Activated naive CD4-positive, alpha-beta T cell treated with anti-CD3 and anti-CD28 coated beads for 36 hours (primary cell): ENCODE measurements at regions of chr7 and their contacts with region 1.

Region 1: GRCh38 chr7:105652359-105652993 is 71.2 kb upstream of the EFCAB10 start:
- DNase-seq: peak; percentile 79
- H3K4me3 Mint-ChIP-seq: no peak overlapping the region
- H3K27ac Mint-ChIP-seq: no peak overlapping the region
- H3K4me1 Mint-ChIP-seq: peaks cover 10% of the 10 kb centered on the region
- H3K27me3 Mint-ChIP-seq: no peaks in the 10 kb centered on the region

Region 2: DNA sequence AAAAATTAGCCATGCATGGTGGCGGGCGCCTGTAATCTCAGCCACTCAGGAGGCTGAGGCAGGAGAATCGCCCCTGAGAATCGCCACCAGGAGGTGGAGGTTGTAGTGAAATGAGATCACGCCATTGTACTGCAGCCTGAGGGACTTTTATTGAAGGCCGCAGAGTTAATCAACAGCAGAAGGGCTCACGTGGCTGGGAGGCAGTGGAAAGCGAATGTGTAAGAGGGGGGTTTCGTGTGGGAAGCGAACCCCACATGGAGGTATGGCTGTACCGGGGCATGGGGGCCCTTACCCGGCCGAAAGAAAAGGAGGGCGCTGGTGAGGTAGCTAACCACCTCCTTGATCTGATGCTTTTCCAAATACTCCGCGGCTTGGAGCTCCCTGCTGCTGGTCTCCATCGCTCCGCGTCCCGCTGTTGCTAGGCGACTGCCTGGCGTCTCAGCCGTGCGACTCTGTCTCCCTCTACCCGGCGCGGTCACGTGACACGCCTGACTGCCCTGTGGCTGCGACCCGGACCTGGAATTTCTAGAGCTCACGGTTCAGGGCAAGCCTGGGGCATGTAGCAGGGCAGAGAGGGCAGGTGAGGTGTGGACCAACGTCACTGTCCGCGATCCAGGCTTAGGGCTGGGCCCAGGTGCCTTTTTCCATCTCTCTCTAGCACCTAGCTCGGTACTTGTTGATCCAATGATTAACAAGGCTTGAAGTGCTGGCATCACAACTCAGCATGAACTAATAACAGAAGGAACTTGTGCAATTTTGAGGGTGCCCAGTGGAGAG is 71.2 kb before region 1 on chr7 and contains the start of gene EFCAB10:
- CTCF ChIA-PET with region 1: no interaction called
- intact Hi-C with region 1: no loop called
- DNase-seq: peak; percentile 78
- H3K4me3 Mint-ChIP-seq: peak within 1 kb of the TSS; percentile 74
- H3K27ac Mint-ChIP-seq: no peak within 1 kb of the TSS
- H3K4me1 Mint-ChIP-seq: peaks cover 6% of the 10 kb centered on the region
- H3K27me3 Mint-ChIP-seq: peaks cover 5% of the 10 kb centered on the region
- total RNA-seq, gene EFCAB10: not detected

Region 3: GRCh38 chr7:105673367-105674142 is 21.1 kb after region 1 on chr7:
- CTCF ChIA-PET with region 1: interaction called, 55 read pairs
- intact Hi-C with region 1: no loop called
- DNase-seq: peak; percentile 24
- H3K4me3 Mint-ChIP-seq: no peak overlapping the region
- H3K27ac Mint-ChIP-seq: peak overlapping the region; percentile 76
- H3K4me1 Mint-ChIP-seq: peaks cover 61% of the 10 kb centered on the region
- H3K27me3 Mint-ChIP-seq: no peaks in the 10 kb centered on the region

Region 4: DNA sequence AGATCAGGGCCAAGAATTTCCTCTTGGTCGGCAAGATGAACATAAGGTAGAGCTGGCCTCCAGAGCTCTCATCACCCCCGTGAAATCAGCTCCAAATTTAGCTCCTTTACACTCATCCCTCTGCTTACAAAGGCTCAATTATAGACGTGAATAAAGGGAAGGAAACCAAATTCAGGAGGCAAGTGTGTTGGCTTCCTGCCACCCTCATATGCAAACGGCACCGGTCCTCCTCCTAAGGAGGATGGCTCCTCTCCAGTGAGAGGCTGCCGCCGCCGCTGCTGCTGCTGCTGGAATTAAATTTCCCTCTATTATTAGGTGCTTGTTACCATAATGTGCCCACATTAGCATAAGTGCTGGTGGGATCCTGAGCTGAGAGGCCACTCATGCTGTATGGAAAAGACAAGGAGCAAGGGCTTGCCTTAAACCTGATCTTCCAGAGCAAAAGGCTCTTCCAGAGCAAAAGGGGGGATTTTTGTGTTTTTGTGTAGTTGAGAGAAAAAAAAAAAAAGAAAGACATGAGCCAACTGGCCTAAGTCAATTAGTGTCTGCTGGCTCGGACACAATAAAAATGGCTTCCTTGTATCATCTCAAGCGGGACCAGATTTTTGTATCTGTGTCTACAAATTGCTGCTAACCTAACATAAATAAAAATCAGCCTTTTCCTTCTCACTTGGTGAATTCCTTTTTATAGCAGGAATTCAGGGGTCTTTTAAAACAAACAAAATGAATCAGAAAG is 379.0 kb after region 1 on chr7:
- CTCF ChIA-PET with region 1: interaction called, 15 read pairs
- intact Hi-C with region 1: no loop called
- DNase-seq: peak; percentile 38
- H3K4me3 Mint-ChIP-seq: no peak overlapping the region
- H3K27ac Mint-ChIP-seq: no peak overlapping the region
- H3K4me1 Mint-ChIP-seq: peaks cover 28% of the 10 kb centered on the region
- H3K27me3 Mint-ChIP-seq: no peaks in the 10 kb centered on the region

Region 5: GRCh38 chr7:106166655-106167342 is 514.3 kb after region 1 on chr7:
- CTCF ChIA-PET with region 1: interaction called, 3 read pairs
- intact Hi-C with region 1: loop called (anchors 5 kb)
- DNase-seq: peak; percentile 63
- H3K4me3 Mint-ChIP-seq: no peak overlapping the region
- H3K27ac Mint-ChIP-seq: no peak overlapping the region
- H3K4me1 Mint-ChIP-seq: no peaks in the 10 kb centered on the region
- H3K27me3 Mint-ChIP-seq: peaks cover 3% of the 10 kb centered on the region